ENCODE measurements at regions of chr19 and their contacts with region 1.

Region 1: DNA sequence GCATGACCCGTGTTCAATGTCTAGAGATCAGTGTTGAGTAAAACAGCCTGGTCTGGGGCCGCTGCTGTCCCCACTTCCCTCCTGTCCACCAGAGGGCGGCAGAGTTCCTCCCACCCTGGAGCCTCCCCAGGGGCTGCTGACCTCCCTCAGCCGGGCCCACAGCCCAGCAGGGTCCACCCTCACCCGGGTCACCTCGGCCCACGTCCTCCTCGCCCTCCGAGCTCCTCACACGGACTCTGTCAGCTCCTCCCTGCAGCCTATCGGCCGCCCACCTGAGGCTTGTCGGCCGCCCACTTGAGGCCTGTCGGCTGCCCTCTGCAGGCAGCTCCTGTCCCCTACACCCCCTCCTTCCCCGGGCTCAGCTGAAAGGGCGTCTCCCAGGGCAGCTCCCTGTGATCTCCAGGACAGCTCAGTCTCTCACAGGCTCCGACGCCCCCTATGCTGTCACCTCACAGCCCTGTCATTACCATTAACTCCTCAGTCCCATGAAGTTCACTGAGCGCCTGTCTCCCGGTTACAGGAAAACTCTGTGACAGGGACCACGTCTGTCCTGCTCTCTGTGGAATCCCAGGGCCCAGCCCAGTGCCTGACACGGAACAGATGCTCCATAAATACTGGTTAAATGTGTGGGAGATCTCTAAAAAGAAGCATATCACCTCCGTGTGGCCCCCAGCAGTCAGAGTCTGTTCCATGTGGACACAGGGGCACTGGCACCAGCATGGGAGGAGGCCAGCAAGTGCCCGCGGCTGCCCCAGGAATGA is 1.5 kb upstream of the CEACAM5 start:
- DNase-seq: peak; percentile 80
- ATAC-seq: peak; percentile 97
- H3K4me3 Mint-ChIP-seq: peak overlapping the region; percentile 39
- H3K27ac Mint-ChIP-seq: no peak overlapping the region
- H3K4me1 Mint-ChIP-seq: no peaks in the 10 kb centered on the region
- H3K27me3 Mint-ChIP-seq: peaks cover 38% of the 10 kb centered on the region
- CTCF ChIP-seq: peak; percentile 100

Region 2: GRCh38 chr19:41563854-41564514 is 142.9 kb before region 1 on chr19:
- CTCF ChIA-PET with region 1: no interaction called
- POLR2A ChIA-PET with region 1: no interaction called
- intact Hi-C with region 1: no loop called
- DNase-seq: peak; percentile 75
- ATAC-seq: peak; percentile 80
- H3K4me3 Mint-ChIP-seq: peak overlapping the region; percentile 68
- H3K27ac Mint-ChIP-seq: peak overlapping the region; percentile 66
- H3K4me1 Mint-ChIP-seq: peaks cover 45% of the 10 kb centered on the region
- H3K27me3 Mint-ChIP-seq: peaks cover 18% of the 10 kb centered on the region
- CTCF ChIP-seq: no peak

Region 3: GRCh38 chr19:41575998-41576397 is 130.9 kb before region 1 on chr19 and contains the start of gene CEACAM21:
- CTCF ChIA-PET with region 1: no interaction called
- POLR2A ChIA-PET with region 1: no interaction called
- intact Hi-C with region 1: no loop called
- DNase-seq: peak; percentile 66
- ATAC-seq: peak; percentile 98
- H3K4me3 Mint-ChIP-seq: peak within 1 kb of the TSS; percentile 57
- H3K27ac Mint-ChIP-seq: peak within 1 kb of the TSS; percentile 69
- H3K4me1 Mint-ChIP-seq: peaks cover 19% of the 10 kb centered on the region
- H3K27me3 Mint-ChIP-seq: no peaks in the 10 kb centered on the region
- CTCF ChIP-seq: no peak
- total RNA-seq, gene CEACAM21: 17.7 to 19.8 TPM

Region 4: DNA sequence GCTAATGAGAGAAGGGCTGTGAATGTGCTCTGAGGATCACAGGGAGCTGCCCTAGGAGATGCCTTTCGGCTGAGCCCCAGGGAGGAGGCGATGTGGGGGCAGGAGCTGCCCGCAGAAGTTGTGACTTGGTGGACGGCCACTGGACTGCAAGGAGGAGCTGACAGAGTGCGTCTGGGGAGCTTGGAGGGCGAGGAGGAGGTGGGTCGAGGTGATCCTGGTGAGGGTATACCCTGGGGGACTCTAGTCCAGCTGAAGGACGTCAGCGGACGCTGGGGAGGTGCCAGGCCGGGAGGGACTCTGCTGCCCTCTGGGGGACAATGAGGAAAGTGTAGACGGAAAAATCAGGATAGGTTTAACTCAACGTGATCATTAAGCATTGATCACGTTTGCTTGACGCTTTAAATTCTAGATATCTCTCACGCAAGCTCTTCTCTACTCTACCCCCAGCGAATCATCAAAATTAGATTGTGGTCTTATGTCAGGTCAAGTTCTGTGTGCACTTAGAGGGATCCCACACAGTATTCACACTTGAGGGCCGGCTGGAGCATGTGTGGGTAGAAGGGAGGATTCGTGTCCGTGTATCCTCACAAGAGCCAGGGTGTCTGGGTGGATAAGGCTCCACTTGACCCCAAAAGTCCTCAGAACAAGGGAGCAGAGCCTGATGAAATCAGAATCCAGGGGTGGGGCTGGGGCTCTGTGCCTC is 15.5 kb before region 1 on chr19:
- CTCF ChIA-PET with region 1: interaction called, 19 read pairs
- POLR2A ChIA-PET with region 1: no interaction called
- intact Hi-C with region 1: no loop called
- DNase-seq: peak; percentile 45
- ATAC-seq: peak; percentile 37
- H3K4me3 Mint-ChIP-seq: no peak overlapping the region
- H3K27ac Mint-ChIP-seq: no peak overlapping the region
- H3K4me1 Mint-ChIP-seq: no peaks in the 10 kb centered on the region
- H3K27me3 Mint-ChIP-seq: peaks cover 26% of the 10 kb centered on the region
- CTCF ChIP-seq: peak; percentile 64

Region 5: GRCh38 chr19:41734617-41735016 is 27.7 kb after region 1 on chr19:
- CTCF ChIA-PET with region 1: interaction called, 17 read pairs
- POLR2A ChIA-PET with region 1: interaction called, 3 read pairs
- intact Hi-C with region 1: no loop called
- DNase-seq: no peak
- ATAC-seq: no peak
- H3K4me3 Mint-ChIP-seq: no peak overlapping the region
- H3K27ac Mint-ChIP-seq: no peak overlapping the region
- H3K4me1 Mint-ChIP-seq: peaks cover 7% of the 10 kb centered on the region
- H3K27me3 Mint-ChIP-seq: peaks cover 46% of the 10 kb centered on the region
- CTCF ChIP-seq: no peak

Region 6: GRCh38 chr19:41746593-41747227 is 39.8 kb after region 1 on chr19:
- CTCF ChIA-PET with region 1: interaction called, 50 read pairs
- POLR2A ChIA-PET with region 1: no interaction called
- intact Hi-C with region 1: loop called (anchors 2 kb)
- DNase-seq: peak; percentile 74
- ATAC-seq: peak; percentile 85
- H3K4me3 Mint-ChIP-seq: no peak overlapping the region
- H3K27ac Mint-ChIP-seq: no peak overlapping the region
- H3K4me1 Mint-ChIP-seq: peaks cover 11% of the 10 kb centered on the region
- H3K27me3 Mint-ChIP-seq: peaks cover 51% of the 10 kb centered on the region
- CTCF ChIP-seq: peak; percentile 74